T-cell (primary cell): ENCODE measurements at regions of chr3 and their contacts with region 1.

Region 1: GRCh38 chr3:33194303-33194702 is 24.3 kb downstream of the SUSD5 start:
- DNase-seq: no peak
- ATAC-seq: no peak
- H3K4me3 ChIP-seq: no peak overlapping the region
- H3K4me3 Mint-ChIP-seq: no peak overlapping the region
- H3K27ac ChIP-seq: no peak overlapping the region
- H3K27ac Mint-ChIP-seq: no peak overlapping the region
- H3K4me1 ChIP-seq: no peaks in the 10 kb centered on the region
- H3K4me1 Mint-ChIP-seq: no peaks in the 10 kb centered on the region
- H3K27me3 ChIP-seq: no peaks in the 10 kb centered on the region
- H3K27me3 Mint-ChIP-seq: peaks cover 0 to 5% of the 10 kb centered on the region in 2 donors

Region 2: GRCh38 chr3:33181229-33181628 is 13.1 kb before region 1 on chr3:
- CTCF ChIA-PET with region 1: no interaction called
- POLR2A ChIA-PET with region 1: no interaction called
- DNase-seq: no peak
- ATAC-seq: no peak
- H3K4me3 ChIP-seq: no peak overlapping the region
- H3K4me3 Mint-ChIP-seq: no peak overlapping the region
- H3K27ac ChIP-seq: no peak overlapping the region
- H3K27ac Mint-ChIP-seq: no peak overlapping the region
- H3K4me1 ChIP-seq: no peaks in the 10 kb centered on the region
- H3K4me1 Mint-ChIP-seq: no peaks in the 10 kb centered on the region
- H3K27me3 ChIP-seq: no peaks in the 10 kb centered on the region
- H3K27me3 Mint-ChIP-seq: peaks cover 6 to 9% of the 10 kb centered on the region in 2 donors

Region 3: GRCh38 chr3:33482111-33482521 is 287.8 kb after region 1 on chr3:
- CTCF ChIA-PET with region 1: no interaction called
- POLR2A ChIA-PET with region 1: interaction called in 1 of 2 experiments, 11 read pairs
- DNase-seq: no peak
- ATAC-seq: no peak
- H3K4me3 ChIP-seq: no peak overlapping the region
- H3K4me3 Mint-ChIP-seq: no peak overlapping the region
- H3K27ac ChIP-seq: no peak overlapping the region
- H3K27ac Mint-ChIP-seq: no peak overlapping the region
- H3K4me1 ChIP-seq: no peaks in the 10 kb centered on the region
- H3K4me1 Mint-ChIP-seq: no peaks in the 10 kb centered on the region
- H3K27me3 ChIP-seq: no peaks in the 10 kb centered on the region
- H3K27me3 Mint-ChIP-seq: no peaks in the 10 kb centered on the region